ENCODE measurements at regions of chr2 and their contacts with region 1.

Region 1: GRCh38 chr2:110886826-110887573 is 154.6 kb downstream of the ACOXL start:
- DNase-seq: no peak
- H3K4me3 ChIP-seq: no peak overlapping the region
- H3K27ac ChIP-seq: no peak overlapping the region
- H3K4me1 ChIP-seq: no peaks in the 10 kb centered on the region
- H3K27me3 ChIP-seq: no peaks in the 10 kb centered on the region
- CTCF ChIP-seq: no peak

Region 2: GRCh38 chr2:110858135-110858725 is 28.8 kb before region 1 on chr2:
- CTCF ChIA-PET with region 1: no interaction called
- POLR2A ChIA-PET with region 1: no interaction called
- intact Hi-C with region 1: no loop called
- DNase-seq: no peak
- H3K4me3 ChIP-seq: no peak overlapping the region
- H3K27ac ChIP-seq: no peak overlapping the region
- H3K4me1 ChIP-seq: no peaks in the 10 kb centered on the region
- H3K27me3 ChIP-seq: no peaks in the 10 kb centered on the region
- CTCF ChIP-seq: no peak

Region 3: GRCh38 chr2:110979471-110980338 is 92.7 kb after region 1 on chr2:
- CTCF ChIA-PET with region 1: interaction called, 12 read pairs
- POLR2A ChIA-PET with region 1: no interaction called
- intact Hi-C with region 1: no loop called
- DNase-seq: peak in 1 of 2 experiments; percentile 3
- H3K4me3 ChIP-seq: no peak overlapping the region
- H3K27ac ChIP-seq: no peak overlapping the region
- H3K4me1 ChIP-seq: no peaks in the 10 kb centered on the region
- H3K27me3 ChIP-seq: no peaks in the 10 kb centered on the region
- CTCF ChIP-seq: no peak

Measured in PC-9 (cell line).